RWPE1 (cell line): ENCODE measurements at regions of chr10 and their contacts with region 1.

Region 1: GRCh38 chr10:117442944-117443685 is 67.9 kb upstream of the PDZD8 start:
- DNase-seq: peak; percentile 65
- H3K27ac ChIP-seq: peak overlapping the region; percentile 88
- CTCF ChIP-seq: peak; percentile 81

Region 2: DNA sequence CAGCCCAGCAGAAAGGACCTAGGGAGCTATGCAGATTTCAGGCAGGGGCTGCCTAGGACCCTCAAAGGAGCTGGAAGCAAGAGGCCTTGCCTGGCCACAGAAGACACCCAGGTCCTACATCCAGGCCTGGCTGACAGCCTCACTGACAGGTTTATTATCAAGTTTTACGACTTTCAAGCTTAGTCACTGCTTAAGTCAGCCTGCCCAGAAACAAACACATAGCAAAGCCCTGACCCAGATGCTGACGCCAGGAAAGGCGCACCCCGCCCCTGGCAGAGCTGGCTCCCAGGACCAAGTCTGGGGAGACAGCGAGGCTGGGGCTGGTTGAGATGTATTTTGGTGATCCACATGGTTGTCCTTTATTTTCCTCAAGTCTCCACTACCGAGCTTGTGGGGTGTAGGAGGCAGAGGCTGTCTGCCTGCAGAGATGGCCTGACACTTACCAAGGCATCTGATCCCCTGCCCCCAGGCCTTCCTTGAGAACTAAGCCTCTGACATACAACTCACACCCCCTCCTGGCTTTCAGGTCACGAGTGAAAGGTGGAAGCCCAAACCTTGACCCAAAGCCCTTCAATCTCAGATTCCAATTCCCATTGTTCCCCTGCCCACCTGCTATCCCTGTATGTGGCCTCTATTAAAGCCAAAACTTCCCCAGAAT is 18.8 kb after region 1 on chr10:
- CTCF ChIA-PET with region 1: interaction called, 10 read pairs
- POLR2A ChIA-PET with region 1: interaction called, 4 read pairs
- DNase-seq: peak; percentile 96
- H3K27ac ChIP-seq: peak overlapping the region; percentile 91
- CTCF ChIP-seq: no peak

Region 3: GRCh38 chr10:117503244-117504205 is 60.4 kb after region 1 on chr10:
- CTCF ChIA-PET with region 1: no interaction called
- POLR2A ChIA-PET with region 1: no interaction called
- DNase-seq: no peak
- H3K27ac ChIP-seq: no peak overlapping the region
- CTCF ChIP-seq: no peak